ENCODE measurements at regions of chr20 and their contacts with region 1.

Region 1: GRCh38 chr20:19699180-19699971 is 58.7 kb upstream of the RIN2 start:
- DNase-seq: no peak
- ATAC-seq: peak in 2 of 4 donors; percentile 39 to 45
- H3K4me3 ChIP-seq: no peak overlapping the region
- H3K27ac ChIP-seq: no peak overlapping the region
- H3K4me1 ChIP-seq: peaks cover 0 to 17% (median 4%) of the 10 kb centered on the region in 12 donors
- H3K27me3 ChIP-seq: no peaks in the 10 kb centered on the region
- CTCF ChIP-seq: no peak
- POLR2A ChIP-seq: no peak

Region 2: DNA sequence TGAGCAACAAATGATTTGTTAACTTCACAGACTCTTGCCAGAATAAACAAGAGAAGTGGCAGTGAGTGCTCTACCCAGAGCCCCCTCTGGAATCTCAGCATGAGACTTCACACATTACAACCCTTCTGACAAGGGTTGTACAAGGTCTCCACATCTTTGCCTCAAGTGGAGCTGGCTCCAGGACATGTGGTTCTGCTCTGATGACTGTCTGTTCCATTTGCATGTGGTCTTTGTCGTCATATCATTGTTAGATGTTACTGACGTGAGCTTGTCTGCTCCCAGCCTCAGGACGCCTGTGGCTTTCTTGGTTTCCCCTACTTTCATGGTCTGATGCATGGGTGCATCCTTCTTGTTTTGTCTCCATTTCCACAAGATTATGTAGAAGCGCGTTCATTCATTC is 372.0 kb before region 1 on chr20:
- intact Hi-C with region 1: no loop called
- DNase-seq: no peak
- ATAC-seq: no peak
- H3K4me3 ChIP-seq: no peak overlapping the region
- H3K27ac ChIP-seq: no peak overlapping the region
- H3K4me1 ChIP-seq: no peaks in the 10 kb centered on the region
- H3K27me3 ChIP-seq: no peaks in the 10 kb centered on the region
- CTCF ChIP-seq: no peak
- POLR2A ChIP-seq: no peak

Region 3: DNA sequence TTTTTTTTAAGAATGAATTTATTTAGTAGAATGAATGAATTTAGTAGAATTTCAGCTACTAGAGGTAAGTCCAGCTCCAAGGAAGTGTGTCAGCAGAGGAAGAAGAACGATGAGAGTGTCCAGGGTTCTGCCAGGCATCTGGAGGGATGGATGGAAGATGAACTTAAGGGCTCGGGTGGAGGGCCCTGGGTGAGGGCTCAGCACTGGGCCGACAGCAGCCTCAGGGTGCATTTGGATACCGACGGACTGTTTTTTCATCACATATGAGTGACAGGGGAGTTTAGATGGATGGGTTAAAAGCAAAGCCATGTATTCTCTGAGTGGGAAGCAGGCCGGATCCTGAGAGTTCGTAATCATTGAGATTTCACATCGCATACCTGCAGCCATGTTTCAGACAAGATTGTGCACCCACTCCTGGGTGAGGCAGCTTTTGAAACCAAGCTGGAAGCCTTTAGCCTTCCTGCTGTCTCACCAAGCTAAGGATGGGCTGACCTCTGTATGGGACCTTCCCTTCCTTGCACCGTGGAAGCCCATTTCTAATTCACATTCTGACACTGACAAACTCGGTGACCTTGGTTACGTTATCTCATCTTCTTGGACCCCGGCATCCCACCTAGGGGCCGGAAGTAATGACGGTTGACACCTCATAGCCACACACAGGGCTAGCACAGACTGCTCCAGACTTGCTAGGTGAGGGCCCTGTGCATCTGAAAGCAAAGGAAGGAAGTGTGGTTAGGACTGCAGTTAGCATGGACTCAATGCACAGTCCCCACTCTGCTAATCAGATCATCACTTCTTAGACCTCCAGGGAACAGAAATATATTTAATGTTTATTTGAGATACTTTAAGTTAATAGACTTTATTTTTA is 258.5 kb before region 1 on chr20:
- intact Hi-C with region 1: no loop called
- DNase-seq: no peak
- ATAC-seq: no peak
- H3K4me3 ChIP-seq: no peak overlapping the region
- H3K27ac ChIP-seq: no peak overlapping the region
- H3K4me1 ChIP-seq: no peaks in the 10 kb centered on the region
- H3K27me3 ChIP-seq: no peaks in the 10 kb centered on the region
- CTCF ChIP-seq: no peak
- POLR2A ChIP-seq: no peak

Region 4: GRCh38 chr20:19742974-19743639 is 43.7 kb after region 1 on chr20:
- intact Hi-C with region 1: loop called in 2 of 10 experiments (anchors 5 kb)
- DNase-seq: no peak
- ATAC-seq: peak in 1 of 4 donors; percentile 10
- H3K4me3 ChIP-seq: no peak overlapping the region
- H3K27ac ChIP-seq: no peak overlapping the region
- H3K4me1 ChIP-seq: peaks cover 0 to 7% (median 0%) of the 10 kb centered on the region in 12 donors
- H3K27me3 ChIP-seq: no peaks in the 10 kb centered on the region
- CTCF ChIP-seq: no peak
- POLR2A ChIP-seq: no peak

Measured in heart left ventricle (tissue), 16 donors.